ENCODE measurements at regions of chr12 and their contacts with region 1.

Region 1: GRCh38 chr12:6195665-6196535 is 4.3 kb upstream of the CD9 start:
- DNase-seq: peak; percentile 52 to 86 (median 68)
- ATAC-seq: peak; percentile 80
- H3K4me3 ChIP-seq: no peak overlapping the region
- H3K4me3 Mint-ChIP-seq: no peak overlapping the region
- H3K27ac ChIP-seq: no peak overlapping the region
- H3K27ac Mint-ChIP-seq: no peak overlapping the region
- H3K4me1 ChIP-seq: peaks cover 11% of the 10 kb centered on the region
- H3K4me1 Mint-ChIP-seq: peaks cover under 1% of the 10 kb centered on the region
- H3K27me3 ChIP-seq: peaks cover 8 to 10% of the 10 kb centered on the region in 2 experiments
- H3K27me3 Mint-ChIP-seq: peaks cover 8% of the 10 kb centered on the region
- CTCF ChIP-seq: peak; percentile 92

Region 2: DNA sequence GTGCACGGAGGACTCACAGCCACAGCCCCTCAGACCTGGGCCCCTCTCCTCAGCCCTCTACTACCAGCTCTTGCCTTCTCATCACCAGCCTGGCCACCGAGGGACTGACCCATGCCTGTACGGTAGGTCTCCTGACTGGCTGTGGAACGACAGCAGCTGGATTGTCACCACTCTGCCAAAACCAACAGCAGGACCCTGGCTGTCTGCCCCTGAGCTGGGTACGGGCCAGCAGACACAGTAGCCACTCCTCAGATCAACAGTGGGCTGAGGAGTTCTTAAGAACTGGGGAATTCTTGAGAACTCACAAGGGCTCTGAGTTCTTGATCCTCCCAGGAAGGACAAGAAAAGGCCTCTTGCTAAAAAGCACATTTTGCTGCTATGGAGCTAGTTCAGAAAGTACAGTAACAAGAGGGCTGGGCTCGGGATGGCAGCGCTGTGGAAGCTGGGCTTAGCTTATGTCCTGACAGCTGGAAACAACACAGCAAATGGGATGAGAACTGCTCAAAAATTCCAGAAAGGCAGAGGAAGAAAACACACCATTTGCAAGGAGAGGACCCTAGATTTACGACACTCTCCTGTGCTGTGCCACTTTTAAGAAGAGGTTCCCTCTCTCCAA is 427.2 kb before region 1 on chr12:
- CTCF ChIA-PET with region 1: no interaction called
- POLR2A ChIA-PET with region 1: no interaction called
- intact Hi-C with region 1: no loop called
- DNase-seq: no peak
- ATAC-seq: no peak
- H3K4me3 ChIP-seq: no peak overlapping the region
- H3K4me3 Mint-ChIP-seq: no peak overlapping the region
- H3K27ac ChIP-seq: no peak overlapping the region
- H3K27ac Mint-ChIP-seq: no peak overlapping the region
- H3K4me1 ChIP-seq: no peaks in the 10 kb centered on the region
- H3K4me1 Mint-ChIP-seq: no peaks in the 10 kb centered on the region
- H3K27me3 ChIP-seq: no peaks in the 10 kb centered on the region
- H3K27me3 Mint-ChIP-seq: peaks cover 10% of the 10 kb centered on the region
- CTCF ChIP-seq: no peak

Region 3: DNA sequence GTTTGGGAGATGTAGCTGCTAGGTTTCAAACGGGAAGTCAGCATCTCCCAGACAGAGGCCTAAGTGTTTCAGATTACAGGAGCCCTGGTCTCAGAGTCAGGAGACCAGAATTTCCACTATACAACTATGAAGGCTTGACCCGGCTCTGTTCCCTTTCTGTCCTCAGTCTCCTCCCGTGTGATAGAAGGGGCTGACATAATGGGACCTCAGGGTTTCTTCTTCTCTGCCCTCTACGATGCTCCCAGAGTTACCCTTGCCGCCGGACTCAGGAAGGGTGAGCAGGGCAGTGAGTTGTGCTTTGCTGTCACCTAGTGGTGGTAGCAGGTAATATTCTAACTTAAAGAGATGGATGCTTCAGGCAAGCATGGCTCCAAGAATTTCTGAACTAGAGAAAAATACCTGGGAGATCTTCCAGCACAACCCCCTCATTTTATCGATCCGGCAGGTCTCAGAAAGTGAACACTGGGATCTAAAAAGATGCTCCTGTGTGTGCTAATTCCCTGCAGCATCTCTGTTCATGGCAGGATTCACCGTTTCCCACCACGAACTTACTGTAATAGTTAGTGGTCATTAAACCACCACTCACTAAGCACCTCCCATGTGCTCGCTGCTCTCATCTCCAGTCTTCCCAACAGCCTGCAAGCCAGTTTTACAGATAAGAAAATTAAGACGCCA is 155.9 kb before region 1 on chr12:
- CTCF ChIA-PET with region 1: no interaction called
- POLR2A ChIA-PET with region 1: no interaction called
- intact Hi-C with region 1: no loop called
- DNase-seq: peak in 12 of 14 experiments; percentile 11 to 78 (median 32)
- ATAC-seq: peak; percentile 84
- H3K4me3 ChIP-seq: no peak overlapping the region
- H3K4me3 Mint-ChIP-seq: no peak overlapping the region
- H3K27ac ChIP-seq: no peak overlapping the region
- H3K27ac Mint-ChIP-seq: no peak overlapping the region
- H3K4me1 ChIP-seq: peaks cover 5% of the 10 kb centered on the region
- H3K4me1 Mint-ChIP-seq: no peaks in the 10 kb centered on the region
- H3K27me3 ChIP-seq: peaks cover 0 to 2% of the 10 kb centered on the region in 2 experiments
- H3K27me3 Mint-ChIP-seq: no peaks in the 10 kb centered on the region
- CTCF ChIP-seq: peak; percentile 88

Region 4: DNA sequence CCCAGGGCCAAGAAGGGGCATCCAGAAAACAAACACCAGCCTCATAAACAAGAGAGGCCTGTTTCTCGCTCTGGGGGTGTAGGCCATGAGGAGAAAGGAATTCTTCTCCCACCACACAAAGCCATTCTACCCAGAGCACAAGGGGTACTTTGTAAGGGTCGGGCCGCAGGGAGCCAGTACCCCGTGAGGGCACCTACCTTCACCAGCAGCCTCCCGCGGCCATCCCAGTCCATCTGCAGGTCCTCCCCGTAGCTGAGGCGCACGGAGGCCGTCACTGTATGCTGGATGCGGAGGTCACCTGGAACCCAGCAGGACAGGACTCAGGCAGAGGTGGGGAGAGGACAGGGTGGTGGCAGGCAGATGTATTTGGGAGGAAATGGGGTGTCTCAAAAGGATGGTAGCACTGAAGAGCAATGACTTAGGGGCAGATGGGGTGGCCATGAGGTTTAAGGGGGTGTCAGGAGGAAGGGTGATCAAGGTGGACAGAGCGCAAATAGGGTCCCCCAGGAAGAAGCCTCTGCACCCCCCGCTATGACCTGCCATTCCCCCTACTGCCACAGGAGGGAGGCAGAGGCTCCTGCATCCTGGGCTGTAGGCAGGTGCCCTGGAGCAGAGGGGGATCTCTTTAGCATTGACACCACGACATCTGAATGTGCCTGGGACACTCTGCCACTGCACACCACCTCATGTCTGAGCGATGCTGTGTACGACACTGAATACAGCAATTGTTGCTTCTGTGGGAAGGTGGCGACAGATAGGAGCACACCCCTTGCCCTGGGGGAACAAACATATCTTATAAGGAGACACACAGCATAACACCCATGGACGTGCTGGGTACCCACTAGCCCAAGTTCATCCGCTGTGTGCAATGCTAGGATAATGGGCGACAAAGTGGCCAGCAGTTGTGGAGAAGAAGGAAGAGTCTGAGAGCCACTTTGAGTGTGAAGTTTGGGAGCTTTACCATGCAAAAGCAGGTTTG is 132.9 kb before region 1 on chr12:
- CTCF ChIA-PET with region 1: interaction called, 3 read pairs
- POLR2A ChIA-PET with region 1: no interaction called
- intact Hi-C with region 1: loop called (anchors 1 kb)
- DNase-seq: peak; percentile 32 to 76 (median 50)
- ATAC-seq: peak; percentile 97
- H3K4me3 ChIP-seq: no peak overlapping the region
- H3K4me3 Mint-ChIP-seq: no peak overlapping the region
- H3K27ac ChIP-seq: no peak overlapping the region
- H3K27ac Mint-ChIP-seq: no peak overlapping the region
- H3K4me1 ChIP-seq: no peaks in the 10 kb centered on the region
- H3K4me1 Mint-ChIP-seq: no peaks in the 10 kb centered on the region
- H3K27me3 ChIP-seq: peaks cover 0 to 5% of the 10 kb centered on the region in 2 experiments
- H3K27me3 Mint-ChIP-seq: peaks cover 19% of the 10 kb centered on the region
- CTCF ChIP-seq: peak; percentile 88

Region 5: DNA sequence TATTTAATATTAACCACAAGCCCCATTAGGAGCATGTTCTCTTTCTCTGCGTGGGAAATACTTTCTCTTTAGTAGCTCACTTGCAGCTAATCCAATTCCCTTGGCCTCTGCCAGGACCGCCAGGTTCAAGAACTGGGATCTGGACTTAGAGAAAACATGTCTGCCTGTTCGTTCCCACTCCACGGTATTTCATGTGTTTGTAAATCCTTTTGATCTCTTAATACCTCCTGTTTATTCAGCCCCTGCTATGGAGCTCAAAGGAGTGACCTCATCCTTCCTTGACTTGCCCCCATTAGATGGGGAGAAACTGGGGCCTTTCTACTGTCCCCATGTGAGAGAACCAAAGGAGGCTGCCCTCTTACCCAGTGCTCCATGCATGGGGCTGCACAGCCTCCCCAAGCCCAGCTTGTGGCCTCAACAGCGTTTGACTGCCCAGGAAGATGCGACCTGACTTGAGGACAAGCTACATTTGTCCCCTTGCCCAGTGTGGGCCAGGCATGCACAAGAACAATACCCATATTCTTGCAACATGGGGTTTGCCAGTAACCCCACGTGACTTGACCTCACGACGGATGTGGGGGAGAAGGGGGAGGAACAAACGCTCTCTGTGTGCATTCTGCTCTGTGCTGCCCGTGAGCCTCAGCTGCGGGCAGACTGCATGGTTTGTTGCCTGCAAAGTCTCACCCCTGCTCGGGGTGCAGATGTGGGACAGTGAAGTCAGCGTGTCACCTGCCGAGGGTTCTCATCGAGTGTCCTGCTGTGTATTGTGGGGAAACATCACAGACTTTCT is 34.6 kb after region 1 on chr12:
- CTCF ChIA-PET with region 1: interaction called, 3 read pairs
- POLR2A ChIA-PET with region 1: interaction called, 4 read pairs
- intact Hi-C with region 1: loop called in 1 of 2 experiments (anchors 5 kb)
- DNase-seq: peak; percentile 45 to 90 (median 65)
- ATAC-seq: peak; percentile 97
- H3K4me3 ChIP-seq: no peak overlapping the region
- H3K4me3 Mint-ChIP-seq: peak overlapping the region; percentile 39
- H3K27ac ChIP-seq: peak overlapping the region in 1 of 2 donors; percentile 59
- H3K27ac Mint-ChIP-seq: peak overlapping the region; percentile 90
- H3K4me1 ChIP-seq: peaks cover 36% of the 10 kb centered on the region
- H3K4me1 Mint-ChIP-seq: peaks cover 43% of the 10 kb centered on the region
- H3K27me3 ChIP-seq: no peaks in the 10 kb centered on the region
- H3K27me3 Mint-ChIP-seq: no peaks in the 10 kb centered on the region
- CTCF ChIP-seq: no peak

Region 6: GRCh38 chr12:6278439-6279255 is 82.7 kb after region 1 on chr12:
- CTCF ChIA-PET with region 1: interaction called, 27 read pairs
- POLR2A ChIA-PET with region 1: interaction called, 6 read pairs
- intact Hi-C with region 1: loop called (anchors 1 kb)
- DNase-seq: peak; percentile 60 to 92 (median 82)
- ATAC-seq: peak; percentile 97
- H3K4me3 ChIP-seq: peak overlapping the region; percentile 42
- H3K4me3 Mint-ChIP-seq: peak overlapping the region; percentile 81
- H3K27ac ChIP-seq: no peak overlapping the region
- H3K27ac Mint-ChIP-seq: no peak overlapping the region
- H3K4me1 ChIP-seq: peaks cover 12% of the 10 kb centered on the region
- H3K4me1 Mint-ChIP-seq: peaks cover 6% of the 10 kb centered on the region
- H3K27me3 ChIP-seq: peaks cover 6 to 12% of the 10 kb centered on the region in 2 experiments
- H3K27me3 Mint-ChIP-seq: peaks cover 35% of the 10 kb centered on the region
- CTCF ChIP-seq: peak; percentile 57

Region 7: GRCh38 chr12:6285063-6285477 is 89.2 kb after region 1 on chr12:
- CTCF ChIA-PET with region 1: interaction called, 13 read pairs
- POLR2A ChIA-PET with region 1: no interaction called
- intact Hi-C with region 1: loop called in 1 of 2 experiments (anchors 1 kb)
- DNase-seq: peak; percentile 28 to 85 (median 48)
- ATAC-seq: peak; percentile 90
- H3K4me3 ChIP-seq: no peak overlapping the region
- H3K4me3 Mint-ChIP-seq: no peak overlapping the region
- H3K27ac ChIP-seq: no peak overlapping the region
- H3K27ac Mint-ChIP-seq: no peak overlapping the region
- H3K4me1 ChIP-seq: peaks cover 4% of the 10 kb centered on the region
- H3K4me1 Mint-ChIP-seq: peaks cover 5% of the 10 kb centered on the region
- H3K27me3 ChIP-seq: no peaks in the 10 kb centered on the region
- H3K27me3 Mint-ChIP-seq: peaks cover 14% of the 10 kb centered on the region
- CTCF ChIP-seq: peak; percentile 97